AG04449 (cell line): ENCODE measurements at regions of chr15 and their contacts with region 1.

Region 1: DNA sequence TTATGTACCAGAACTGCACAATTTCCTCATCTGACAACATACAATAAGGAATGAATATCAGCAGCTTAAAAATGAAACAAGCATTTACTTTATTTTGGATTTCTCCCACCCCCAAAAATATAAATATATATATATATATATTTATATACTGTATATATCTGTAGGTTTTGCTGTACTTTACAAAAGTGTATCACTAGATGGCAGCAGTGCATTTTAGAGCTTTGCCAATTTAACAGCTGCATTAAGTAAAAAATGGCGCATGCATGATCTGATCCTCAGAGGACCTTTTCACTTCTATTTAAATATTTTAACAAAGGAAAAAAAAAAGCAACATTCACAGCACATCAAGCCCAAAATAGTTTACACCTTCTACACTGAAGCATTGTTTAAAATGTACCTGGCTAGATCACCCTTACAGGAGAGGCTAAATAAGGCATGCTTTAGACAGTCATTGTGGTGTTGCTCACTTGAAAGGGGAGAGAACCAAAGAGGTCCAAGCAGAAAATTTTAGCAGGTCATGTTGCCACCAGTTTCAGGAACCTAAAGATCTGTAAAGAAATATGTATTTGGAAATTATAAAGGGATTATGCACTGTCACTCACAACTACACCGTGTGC is 72.6 kb downstream of the NPTN start:
- DNase-seq: peak; percentile 23
- H3K4me3 ChIP-seq: no peak overlapping the region
- CTCF ChIP-seq: peak; percentile 32

Region 2: GRCh38 chr15:73550190-73550589 is 10.4 kb before region 1 on chr15:
- CTCF ChIA-PET with region 1: interaction called, 14 read pairs
- POLR2A ChIA-PET with region 1: no interaction called
- DNase-seq: no peak
- H3K4me3 ChIP-seq: no peak overlapping the region
- CTCF ChIP-seq: no peak

Region 3: GRCh38 chr15:73573572-73573971 is 13.0 kb after region 1 on chr15:
- CTCF ChIA-PET with region 1: interaction called, 17 read pairs
- POLR2A ChIA-PET with region 1: no interaction called
- DNase-seq: peak; percentile 70
- H3K4me3 ChIP-seq: no peak overlapping the region
- CTCF ChIP-seq: no peak

Region 4: GRCh38 chr15:73617301-73617831 is 56.8 kb after region 1 on chr15:
- CTCF ChIA-PET with region 1: interaction called, 10 read pairs
- POLR2A ChIA-PET with region 1: no interaction called
- DNase-seq: no peak
- H3K4me3 ChIP-seq: no peak overlapping the region
- CTCF ChIP-seq: no peak

Region 5: DNA sequence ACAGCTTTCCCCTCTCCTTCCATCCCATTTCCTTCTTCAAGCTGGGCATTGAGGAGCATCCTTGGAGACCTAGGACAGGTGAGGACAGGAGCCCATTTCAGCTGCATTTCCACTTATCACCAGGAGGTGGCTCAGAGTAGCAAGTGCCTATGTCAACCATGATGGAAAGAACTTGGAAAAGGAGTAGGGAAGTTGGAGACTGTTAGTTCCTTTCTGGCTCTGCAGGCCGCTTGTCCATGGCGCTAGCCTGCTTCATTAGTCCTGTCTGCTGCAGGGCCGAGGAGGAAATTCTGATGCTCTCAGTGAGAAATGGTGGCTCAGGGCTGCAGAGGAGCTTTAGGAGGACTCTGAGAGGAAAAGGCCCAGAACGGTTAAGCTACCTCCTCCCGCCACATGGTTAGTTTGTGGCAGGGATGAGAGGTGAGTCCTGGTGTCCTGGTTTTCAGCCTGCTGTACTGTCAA is 116.6 kb after region 1 on chr15:
- CTCF ChIA-PET with region 1: interaction called, 11 read pairs
- POLR2A ChIA-PET with region 1: no interaction called
- DNase-seq: no peak
- H3K4me3 ChIP-seq: no peak overlapping the region
- CTCF ChIP-seq: peak; percentile 81

Region 6: GRCh38 chr15:73683777-73684580 is 123.4 kb after region 1 on chr15 and contains the start of gene CD276:
- CTCF ChIA-PET with region 1: interaction called, 18 read pairs
- POLR2A ChIA-PET with region 1: no interaction called
- DNase-seq: no peak
- H3K4me3 ChIP-seq: peak within 1 kb of the TSS; percentile 85
- CTCF ChIP-seq: no peak

Region 7: DNA sequence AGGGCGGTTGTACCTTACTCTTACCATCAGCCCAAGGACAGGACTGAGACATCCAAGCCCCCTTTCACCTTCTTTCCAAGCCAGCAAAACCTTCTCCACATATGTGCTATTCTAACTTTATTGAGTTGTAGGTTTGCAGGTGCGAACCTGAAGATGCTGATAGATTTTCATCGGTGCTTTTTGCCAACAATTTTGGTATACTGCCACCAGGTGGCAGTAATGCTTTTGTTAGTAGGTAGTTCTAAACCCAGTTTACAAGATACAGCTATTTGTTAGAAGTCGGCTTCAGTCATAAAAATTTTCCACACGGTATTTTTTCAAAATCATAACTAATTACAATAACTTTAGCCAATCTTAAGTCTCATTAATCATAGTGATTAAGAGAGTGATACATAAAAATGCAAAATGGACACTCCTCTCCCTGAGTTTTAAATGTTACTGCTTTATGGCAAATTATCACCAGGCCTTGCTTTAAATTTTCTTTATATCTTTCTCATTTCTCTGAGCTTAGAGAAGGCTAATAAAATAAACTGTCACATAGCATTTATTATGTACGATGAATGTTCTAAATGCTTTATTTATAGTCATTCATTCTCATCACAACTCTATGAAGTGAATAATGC is 313.4 kb after region 1 on chr15:
- CTCF ChIA-PET with region 1: no interaction called
- POLR2A ChIA-PET with region 1: no interaction called
- DNase-seq: peak; percentile 17
- H3K4me3 ChIP-seq: no peak overlapping the region
- CTCF ChIP-seq: peak; percentile 23